ENCODE measurements at regions of chr9 and their contacts with region 1.

Region 1: GRCh38 chr9:79477955-79478771 is 93.6 kb upstream of the TLE4 start:
- DNase-seq: peak in 8 of 10 donors; percentile 23 to 73 (median 47)
- H3K4me3 ChIP-seq: no peak overlapping the region
- H3K27ac ChIP-seq: peak overlapping the region in 36 of 59 donors; percentile 5 to 80 (median 58)
- H3K27me3 ChIP-seq: no peaks in the 10 kb centered on the region
- CTCF ChIP-seq: peak in 54 of 56 donors; percentile 12 to 86 (median 66)

Region 2: GRCh38 chr9:79686381-79687130 is 208.4 kb after region 1 on chr9:
- intact Hi-C with region 1: loop called in 1 of 2 experiments (anchors 10 kb)
- DNase-seq: no peak
- H3K4me3 ChIP-seq: no peak overlapping the region
- H3K27ac ChIP-seq: peak overlapping the region in 1 of 59 donors; percentile 26
- H3K27me3 ChIP-seq: no peaks in the 10 kb centered on the region
- CTCF ChIP-seq: no peak

Region 3: DNA sequence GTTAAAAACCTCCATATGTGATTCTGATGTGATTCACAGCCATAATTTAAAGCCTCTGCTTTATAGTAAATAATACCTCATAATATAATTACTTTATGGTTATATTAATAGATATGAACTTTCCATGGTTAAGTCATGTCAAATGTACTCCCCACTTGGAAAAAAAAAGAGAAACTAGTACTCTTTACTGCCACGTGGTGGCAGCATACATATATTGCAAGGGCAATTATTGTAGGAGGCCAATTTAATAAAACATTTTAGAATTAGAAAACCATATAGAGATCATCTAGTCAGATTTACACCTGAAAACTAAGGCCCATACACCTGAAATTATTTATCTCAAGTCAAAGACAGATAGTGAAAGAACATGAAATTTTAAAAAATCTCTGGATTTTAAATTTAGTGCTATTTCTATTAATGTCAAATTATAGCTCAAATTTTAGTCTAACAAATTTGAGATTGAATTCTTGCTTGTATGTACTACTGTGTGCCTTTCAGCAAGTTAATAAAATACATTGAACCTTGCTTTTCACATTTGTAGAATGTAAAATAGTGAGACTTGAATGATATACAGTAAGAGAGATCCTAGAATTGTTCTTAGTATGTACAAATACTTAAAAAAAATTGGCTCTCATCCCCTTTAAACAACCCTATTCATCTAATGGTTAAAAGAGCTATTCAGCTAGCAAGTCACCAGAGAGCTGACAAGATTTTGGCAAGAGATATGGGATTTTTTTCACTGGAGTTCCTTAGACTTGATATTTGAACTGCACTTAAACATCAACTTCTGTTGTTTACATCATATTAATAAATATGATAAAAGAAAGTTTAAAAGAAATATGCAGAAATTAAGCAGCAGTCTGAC is 697.4 kb after region 1 on chr9:
- intact Hi-C with region 1: loop called in 1 of 2 experiments (anchors 10 kb)
- DNase-seq: no peak
- H3K4me3 ChIP-seq: no peak overlapping the region
- H3K27ac ChIP-seq: no peak overlapping the region
- H3K27me3 ChIP-seq: no peaks in the 10 kb centered on the region
- CTCF ChIP-seq: peak; percentile 52 to 83 (median 72)

Measured in dorsolateral prefrontal cortex (tissue), 120 donors.